ENCODE measurements at regions of chr6 and their contacts with region 1.

Region 1: DNA sequence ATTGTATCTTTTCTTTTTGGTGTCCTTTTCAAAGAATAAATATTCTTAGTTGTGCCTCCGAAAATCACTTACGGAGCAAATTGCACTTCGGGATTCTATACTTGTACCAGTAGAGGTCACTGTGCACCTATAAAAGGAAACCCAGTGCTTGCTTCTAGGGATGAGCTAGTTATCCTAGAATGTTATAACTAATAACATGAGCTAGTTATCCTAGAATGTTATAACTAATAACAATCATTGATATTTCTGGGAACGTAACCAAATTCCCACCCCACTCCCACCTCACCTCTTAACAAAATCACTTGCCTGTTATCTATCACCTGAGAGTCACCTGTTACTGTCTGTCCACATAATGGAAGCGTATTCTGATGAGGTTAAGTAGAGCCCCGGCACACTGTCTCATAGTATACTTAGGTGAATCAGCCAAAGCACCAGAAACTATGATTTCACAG is 126.9 kb upstream of the TIAM2 start:
- DNase-seq: peak; percentile 34
- H3K4me3 ChIP-seq: no peak overlapping the region
- H3K27ac ChIP-seq: no peak overlapping the region
- H3K27me3 ChIP-seq: no peaks in the 10 kb centered on the region
- CTCF ChIP-seq: peak; percentile 78

Region 2: GRCh38 chr6:154852687-154853086 is 15.5 kb before region 1 on chr6:
- CTCF ChIA-PET with region 1: interaction called, 38 read pairs
- POLR2A ChIA-PET with region 1: no interaction called
- DNase-seq: peak; percentile 44
- H3K4me3 ChIP-seq: no peak overlapping the region
- H3K27ac ChIP-seq: no peak overlapping the region
- H3K27me3 ChIP-seq: no peaks in the 10 kb centered on the region
- CTCF ChIP-seq: no peak

Region 3: GRCh38 chr6:154909821-154910220 is 41.7 kb after region 1 on chr6:
- CTCF ChIA-PET with region 1: interaction called, 16 read pairs
- POLR2A ChIA-PET with region 1: no interaction called
- DNase-seq: no peak
- H3K4me3 ChIP-seq: no peak overlapping the region
- H3K27ac ChIP-seq: no peak overlapping the region
- H3K27me3 ChIP-seq: no peaks in the 10 kb centered on the region
- CTCF ChIP-seq: no peak

Region 4: GRCh38 chr6:154928325-154928922 is 60.3 kb after region 1 on chr6:
- CTCF ChIA-PET with region 1: interaction called, 18 read pairs
- POLR2A ChIA-PET with region 1: no interaction called
- DNase-seq: peak; percentile 50
- H3K4me3 ChIP-seq: no peak overlapping the region
- H3K27ac ChIP-seq: no peak overlapping the region
- H3K27me3 ChIP-seq: no peaks in the 10 kb centered on the region
- CTCF ChIP-seq: peak; percentile 88

Region 5: DNA sequence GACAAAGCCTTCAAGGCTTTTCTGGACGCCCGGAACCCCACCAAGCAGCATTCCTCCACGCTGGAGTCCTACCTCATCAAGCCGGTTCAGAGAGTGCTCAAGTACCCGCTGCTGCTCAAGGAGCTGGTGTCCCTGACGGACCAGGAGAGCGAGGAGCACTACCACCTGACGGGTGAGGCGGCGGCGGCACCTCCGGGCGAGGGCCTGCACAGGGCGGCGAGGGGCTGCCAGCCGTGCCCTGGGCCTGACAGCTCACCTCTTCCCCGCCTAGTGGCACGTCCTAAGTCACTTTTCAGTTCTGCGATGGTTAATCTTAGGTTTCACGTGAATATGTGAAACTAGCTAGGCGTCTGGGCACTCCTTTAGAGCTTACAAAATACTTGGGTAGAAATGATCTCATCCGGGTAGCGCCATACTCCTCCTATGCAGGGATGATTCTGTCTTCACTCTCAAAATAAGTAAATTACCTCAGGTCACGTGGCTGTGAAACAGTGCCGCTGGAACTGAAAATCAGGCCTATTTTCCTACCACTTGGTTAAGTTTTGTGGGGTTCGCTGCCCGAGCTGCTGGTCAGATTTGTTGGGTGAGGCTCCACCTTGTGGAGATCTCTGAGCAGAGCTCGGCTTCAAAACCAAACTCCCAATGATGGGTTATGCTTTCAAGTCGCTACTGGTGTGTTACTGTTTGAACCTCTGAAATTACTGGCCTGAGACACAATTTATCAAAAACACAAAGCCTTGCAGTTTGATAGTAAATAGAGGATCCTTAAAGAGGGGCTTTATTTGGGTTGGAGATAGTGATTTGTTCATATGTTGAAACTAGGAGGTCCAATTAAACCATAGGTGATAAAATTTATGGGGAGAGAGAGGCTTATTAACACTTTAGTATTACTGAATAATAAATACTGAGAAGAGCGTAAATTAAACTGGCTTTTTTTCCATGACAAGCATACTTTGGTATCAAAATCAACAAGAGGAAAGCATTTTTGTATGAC is 380.1 kb after region 1 on chr6:
- CTCF ChIA-PET with region 1: interaction called, 18 read pairs
- POLR2A ChIA-PET with region 1: no interaction called
- DNase-seq: peak; percentile 62
- H3K4me3 ChIP-seq: no peak overlapping the region
- H3K27ac ChIP-seq: peak overlapping the region; percentile 77
- H3K27me3 ChIP-seq: no peaks in the 10 kb centered on the region
- CTCF ChIP-seq: peak; percentile 87

Measured in AG04450 (cell line).